ENCODE measurements at regions of chr10 and their contacts with region 1.

Region 1: GRCh38 chr10:63166742-63167258 is 33.7 kb downstream of the NRBF2 start:
- DNase-seq: peak; percentile 59
- H3K4me3 ChIP-seq: no peak overlapping the region
- H3K27ac ChIP-seq: no peak overlapping the region
- H3K4me1 ChIP-seq: no peaks in the 10 kb centered on the region
- H3K27me3 ChIP-seq: no peaks in the 10 kb centered on the region
- CTCF ChIP-seq: peak; percentile 72 to 75

Region 2: DNA sequence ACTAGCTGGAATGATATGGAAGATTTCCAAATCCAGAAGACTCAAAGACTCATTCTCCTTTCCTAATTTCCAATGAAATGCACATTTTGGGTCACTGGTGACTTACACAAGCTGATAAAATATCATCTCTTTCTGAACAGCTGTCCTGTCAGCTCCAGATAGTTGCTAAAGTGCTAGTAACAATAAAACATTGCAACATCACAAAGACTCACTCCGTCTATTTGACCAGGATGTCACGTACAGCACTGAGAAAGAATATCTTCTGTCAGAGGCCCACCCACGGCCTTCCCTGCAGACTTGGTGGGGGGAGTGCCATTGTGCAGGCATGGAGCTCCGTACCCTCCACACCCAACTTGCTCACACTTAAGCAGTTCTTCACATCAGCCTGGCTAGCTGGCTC is 271.7 kb before region 1 on chr10:
- CTCF ChIA-PET with region 1: no interaction called
- dilution Hi-C with region 1: no loop called
- in situ Hi-C with region 1: no loop called
- intact Hi-C with region 1: no loop called
- DNase-seq: peak; percentile 27
- H3K4me3 ChIP-seq: no peak overlapping the region
- H3K27ac ChIP-seq: no peak overlapping the region
- H3K4me1 ChIP-seq: peaks cover 15% of the 10 kb centered on the region
- H3K27me3 ChIP-seq: no peaks in the 10 kb centered on the region
- CTCF ChIP-seq: no peak

Region 3: DNA sequence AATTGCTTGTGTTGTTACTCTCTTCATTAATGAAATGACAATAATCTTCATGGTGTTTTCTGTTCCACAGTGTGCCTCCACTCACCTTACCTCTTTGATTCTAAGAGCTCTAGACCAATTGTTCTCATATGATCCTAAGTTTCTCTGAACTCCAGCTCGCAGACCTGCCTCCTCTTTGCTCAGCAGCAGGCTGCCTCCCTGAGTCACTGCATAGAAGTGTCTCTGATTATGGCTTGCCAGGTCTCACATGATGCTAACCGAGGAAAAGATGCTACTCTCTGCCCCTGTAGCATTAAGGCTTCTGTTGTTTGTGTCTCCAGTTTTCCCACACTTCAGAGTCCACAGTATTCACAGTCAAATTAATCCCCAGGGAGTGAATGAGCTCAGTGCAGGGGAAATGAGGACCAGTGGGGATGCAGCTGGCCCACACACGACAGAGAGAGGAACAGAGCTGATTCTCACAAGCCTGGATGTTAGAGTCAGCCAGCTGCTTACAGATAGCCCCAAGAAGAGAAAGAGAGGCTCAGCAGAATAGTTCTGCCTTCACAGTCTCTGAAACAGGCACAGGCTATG is 204.8 kb before region 1 on chr10:
- CTCF ChIA-PET with region 1: no interaction called
- dilution Hi-C with region 1: no loop called
- in situ Hi-C with region 1: no loop called
- intact Hi-C with region 1: no loop called
- DNase-seq: no peak
- H3K4me3 ChIP-seq: no peak overlapping the region
- H3K27ac ChIP-seq: no peak overlapping the region
- H3K4me1 ChIP-seq: no peaks in the 10 kb centered on the region
- H3K27me3 ChIP-seq: no peaks in the 10 kb centered on the region
- CTCF ChIP-seq: no peak

Region 4: DNA sequence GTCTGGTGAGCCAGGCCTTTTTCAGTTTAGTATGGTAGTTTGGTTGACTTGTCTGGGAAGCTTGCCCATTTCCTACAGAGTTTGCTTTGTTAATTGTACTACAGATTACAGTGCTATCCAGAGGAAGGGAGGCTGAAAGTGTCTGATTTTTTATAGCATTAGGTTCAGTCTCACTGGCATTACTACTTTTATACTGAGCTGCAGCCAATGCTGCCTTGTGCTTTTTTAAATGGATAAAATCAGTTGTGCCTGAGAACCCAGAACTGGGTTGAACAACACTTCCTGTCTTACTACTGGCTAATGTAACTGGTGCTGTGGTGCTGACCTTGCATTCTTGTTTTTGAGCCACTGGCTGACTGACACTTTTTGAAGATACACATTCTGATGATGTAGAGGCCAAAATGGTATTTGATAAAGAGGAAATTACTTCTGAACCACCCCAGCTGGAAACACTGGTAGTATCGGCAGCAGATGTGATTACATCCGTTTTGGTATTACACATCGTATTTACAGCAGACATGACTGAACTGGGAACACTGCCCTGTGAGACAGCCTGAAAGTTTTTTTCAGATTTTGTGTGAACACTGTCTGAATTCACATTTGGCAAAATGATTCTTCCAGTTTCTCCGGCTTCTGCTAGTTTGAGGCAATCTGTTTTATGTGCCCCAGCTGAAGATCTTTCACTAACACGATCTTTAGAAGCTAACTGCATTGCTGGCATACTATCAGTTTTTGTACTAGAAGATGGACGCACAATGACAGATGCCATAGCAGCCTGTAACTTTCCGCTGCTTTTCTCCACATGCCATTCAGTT is 40.4 kb after region 1 on chr10:
- CTCF ChIA-PET with region 1: no interaction called
- dilution Hi-C with region 1: no loop called
- in situ Hi-C with region 1: no loop called
- intact Hi-C with region 1: no loop called
- DNase-seq: peak; percentile 62
- H3K4me3 ChIP-seq: no peak overlapping the region
- H3K27ac ChIP-seq: peak overlapping the region; percentile 28
- H3K4me1 ChIP-seq: peaks cover 13% of the 10 kb centered on the region
- H3K27me3 ChIP-seq: no peaks in the 10 kb centered on the region
- CTCF ChIP-seq: no peak

Region 5: DNA sequence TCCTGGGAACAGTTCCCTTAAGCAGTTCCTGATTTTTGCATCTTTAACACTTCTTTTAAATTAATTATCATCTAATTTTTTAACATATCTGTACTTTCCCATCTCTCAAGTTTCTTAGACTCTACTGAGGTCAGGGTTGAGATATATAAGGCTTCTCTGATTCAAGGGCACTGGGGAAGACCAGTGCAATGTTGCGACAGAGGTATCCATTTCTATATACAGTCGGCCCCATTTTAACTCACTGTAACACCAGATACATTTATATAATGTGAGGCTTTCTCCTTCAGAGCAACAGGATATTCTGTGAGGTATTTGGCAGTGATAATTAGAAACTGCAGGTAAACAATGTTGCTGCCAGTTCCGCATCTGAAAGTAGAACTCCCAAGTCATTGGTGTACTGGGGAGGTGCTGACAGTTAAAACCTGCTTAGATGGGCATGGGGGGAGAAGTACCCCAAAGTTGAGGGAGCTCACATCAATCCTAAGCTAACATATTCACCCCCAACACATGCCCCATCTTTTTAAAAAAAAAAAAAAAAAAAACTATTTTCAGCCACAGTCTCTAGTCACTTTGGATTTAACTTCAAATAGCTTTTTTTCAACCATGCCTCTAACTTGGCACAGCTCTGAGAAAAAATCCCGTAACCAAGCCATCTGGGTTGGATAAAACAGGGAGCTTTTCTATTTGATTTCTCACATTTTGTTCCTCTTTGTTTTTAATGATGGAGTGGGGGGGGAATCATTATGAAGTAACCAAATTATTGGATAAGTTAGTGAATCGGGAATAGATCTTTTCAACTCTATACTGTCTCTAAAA is 417.3 kb after region 1 on chr10:
- CTCF ChIA-PET with region 1: interaction called, 14 read pairs
- dilution Hi-C with region 1: no loop called
- in situ Hi-C with region 1: no loop called
- intact Hi-C with region 1: no loop called
- DNase-seq: no peak
- H3K4me3 ChIP-seq: no peak overlapping the region
- H3K27ac ChIP-seq: no peak overlapping the region
- H3K4me1 ChIP-seq: peaks cover 5% of the 10 kb centered on the region
- H3K27me3 ChIP-seq: no peaks in the 10 kb centered on the region
- CTCF ChIP-seq: no peak

Region 6: DNA sequence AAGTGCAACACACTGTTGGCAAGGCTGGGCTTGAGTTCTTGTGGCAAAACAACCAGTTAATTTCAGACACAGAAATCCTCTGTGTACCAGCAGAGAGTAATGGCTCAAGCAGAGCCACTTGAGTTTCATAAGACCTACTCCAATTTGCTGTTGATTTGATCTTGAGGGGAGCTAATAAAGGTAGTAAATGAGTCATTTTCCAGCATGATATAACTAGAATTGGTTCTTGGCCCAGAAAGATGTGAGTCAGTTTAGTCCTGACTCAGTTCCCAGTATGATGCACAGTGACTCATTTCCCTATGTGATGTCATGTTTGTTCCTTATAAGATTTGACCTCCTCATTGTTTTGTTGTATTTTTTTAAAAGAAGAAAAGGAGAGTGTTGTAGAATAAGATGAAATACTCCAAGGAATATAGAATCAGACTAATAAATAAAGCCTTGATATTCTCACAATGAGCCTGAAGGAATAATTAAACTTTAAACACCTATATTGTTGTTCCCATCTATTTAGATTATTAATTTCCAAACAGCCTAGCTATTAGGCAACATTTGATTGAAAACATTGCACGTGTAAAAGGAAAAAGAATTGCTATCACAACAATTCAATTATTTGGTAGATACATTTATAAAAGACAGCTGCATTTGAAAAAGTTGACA is 540.6 kb after region 1 on chr10:
- CTCF ChIA-PET with region 1: interaction called, 4 read pairs
- dilution Hi-C with region 1: no loop called
- in situ Hi-C with region 1: loop called in 1 of 2 experiments (anchors 10 kb)
- intact Hi-C with region 1: no loop called
- DNase-seq: peak; percentile 99
- H3K4me3 ChIP-seq: no peak overlapping the region
- H3K27ac ChIP-seq: peak overlapping the region; percentile 80
- H3K4me1 ChIP-seq: peaks cover 31% of the 10 kb centered on the region
- H3K27me3 ChIP-seq: no peaks in the 10 kb centered on the region
- CTCF ChIP-seq: no peak

Region 7: GRCh38 chr10:63767138-63767801 is 600.5 kb after region 1 on chr10:
- CTCF ChIA-PET with region 1: interaction called, 6 read pairs
- dilution Hi-C with region 1: no loop called
- in situ Hi-C with region 1: no loop called
- intact Hi-C with region 1: loop called (anchors 2 kb)
- DNase-seq: peak; percentile 8
- H3K4me3 ChIP-seq: no peak overlapping the region
- H3K27ac ChIP-seq: no peak overlapping the region
- H3K4me1 ChIP-seq: peaks cover 28% of the 10 kb centered on the region
- H3K27me3 ChIP-seq: no peaks in the 10 kb centered on the region
- CTCF ChIP-seq: peak; percentile 27 to 39

Measured in mammary epithelial cell (primary cell).